CD8-positive, alpha-beta T cell (primary cell): ENCODE measurements at regions of chr9 and their contacts with region 1.

Region 1: DNA sequence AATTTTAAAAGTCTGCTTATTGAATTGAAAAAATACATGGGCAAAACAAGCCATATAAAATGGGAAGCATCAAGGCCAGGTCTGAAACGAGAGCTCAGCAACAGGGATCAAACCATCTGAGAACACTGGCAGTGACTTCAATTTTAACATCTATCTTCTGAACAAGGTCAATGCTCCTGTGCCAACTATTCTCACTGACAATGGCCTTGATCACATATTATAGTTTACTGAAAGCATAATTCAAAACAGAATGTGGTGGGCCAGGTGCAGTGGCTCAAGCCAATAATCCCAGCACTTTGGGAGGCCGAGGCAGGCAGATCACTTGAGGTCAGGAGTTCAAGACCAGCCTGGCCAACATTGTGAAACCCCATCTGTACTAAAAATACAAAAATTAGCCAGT is 9.0 kb downstream of the ECPAS start:
- DNase-seq: no peak
- ATAC-seq: no peak
- H3K4me3 ChIP-seq: no peak overlapping the region
- H3K4me3 Mint-ChIP-seq: no peak overlapping the region
- H3K27ac ChIP-seq: no peak overlapping the region
- H3K27ac Mint-ChIP-seq: no peak overlapping the region
- H3K4me1 ChIP-seq: no peaks in the 10 kb centered on the region
- H3K4me1 Mint-ChIP-seq: peaks cover 51% of the 10 kb centered on the region
- H3K27me3 ChIP-seq: no peaks in the 10 kb centered on the region
- H3K27me3 Mint-ChIP-seq: no peaks in the 10 kb centered on the region
- CTCF ChIP-seq: no peak

Region 2: GRCh38 chr9:112711050-112711689 is 1236.0 kb after region 1 on chr9:
- CTCF ChIA-PET with region 1: no interaction called
- POLR2A ChIA-PET with region 1: no interaction called
- intact Hi-C with region 1: loop called in 1 of 2 experiments (anchors 5 kb)
- DNase-seq: no peak
- ATAC-seq: no peak
- H3K4me3 ChIP-seq: no peak overlapping the region
- H3K4me3 Mint-ChIP-seq: no peak overlapping the region
- H3K27ac ChIP-seq: no peak overlapping the region
- H3K27ac Mint-ChIP-seq: no peak overlapping the region
- H3K4me1 ChIP-seq: peaks cover 5% of the 10 kb centered on the region
- H3K4me1 Mint-ChIP-seq: peaks cover 43% of the 10 kb centered on the region
- H3K27me3 ChIP-seq: no peaks in the 10 kb centered on the region
- H3K27me3 Mint-ChIP-seq: no peaks in the 10 kb centered on the region
- CTCF ChIP-seq: no peak